ENCODE measurements at regions of chr5 and their contacts with region 1.

Region 1: DNA sequence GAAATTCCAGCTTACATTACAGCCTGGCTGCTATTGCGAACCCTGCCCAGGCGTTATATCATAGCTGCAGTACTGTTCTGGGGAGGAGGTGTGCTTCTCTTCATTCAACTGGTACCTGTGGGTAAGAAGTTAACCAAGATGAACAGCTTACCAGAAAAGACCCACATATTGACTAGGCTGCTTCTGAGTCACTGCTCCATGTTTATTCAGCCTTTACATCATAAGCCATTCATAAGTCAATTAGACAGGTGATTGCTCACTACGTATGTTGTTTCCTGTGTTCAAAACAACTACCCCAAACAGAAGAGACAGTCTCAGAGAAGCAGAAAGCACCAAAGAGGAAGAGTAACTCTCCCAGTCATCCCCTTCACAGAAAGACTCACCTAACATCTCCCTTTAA is 34.7 kb upstream of the SLC22A5 start:
- DNase-seq: no peak
- H3K4me3 ChIP-seq: no peak overlapping the region
- H3K27ac ChIP-seq: no peak overlapping the region
- H3K4me1 ChIP-seq: no peaks in the 10 kb centered on the region
- H3K27me3 ChIP-seq: no peaks in the 10 kb centered on the region
- CTCF ChIP-seq: no peak

Region 2: GRCh38 chr5:131281133-131281867 is 1053.5 kb before region 1 on chr5:
- CTCF ChIA-PET with region 1: no interaction called
- POLR2A ChIA-PET with region 1: no interaction called
- intact Hi-C with region 1: no loop called
- DNase-seq: no peak
- H3K4me3 ChIP-seq: no peak overlapping the region
- H3K27ac ChIP-seq: no peak overlapping the region
- H3K4me1 ChIP-seq: peaks cover 22% of the 10 kb centered on the region
- H3K27me3 ChIP-seq: no peaks in the 10 kb centered on the region
- CTCF ChIP-seq: no peak

Region 3: DNA sequence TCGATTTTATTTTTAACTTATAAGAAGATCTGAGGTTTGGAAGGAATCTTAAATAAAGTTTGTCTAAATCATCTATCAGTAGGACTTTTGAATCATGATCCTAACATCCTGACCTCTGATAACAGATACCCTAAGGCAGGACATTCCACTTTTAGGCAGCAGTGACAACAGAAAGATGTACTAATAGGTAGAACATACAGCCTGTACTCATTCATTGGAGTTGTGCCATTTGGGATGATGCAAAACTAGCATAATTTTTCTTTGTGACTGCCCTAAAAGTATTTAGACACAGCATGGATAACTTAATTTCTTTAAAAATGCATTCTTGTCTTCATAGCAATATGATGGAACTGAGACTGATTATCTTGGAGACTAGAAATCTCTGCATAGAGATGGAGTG is 1031.3 kb before region 1 on chr5:
- CTCF ChIA-PET with region 1: no interaction called
- POLR2A ChIA-PET with region 1: no interaction called
- intact Hi-C with region 1: no loop called
- DNase-seq: peak; percentile 53
- H3K4me3 ChIP-seq: no peak overlapping the region
- H3K27ac ChIP-seq: peak overlapping the region; percentile 38
- H3K4me1 ChIP-seq: peaks cover 31% of the 10 kb centered on the region
- H3K27me3 ChIP-seq: no peaks in the 10 kb centered on the region
- CTCF ChIP-seq: no peak

Region 4: DNA sequence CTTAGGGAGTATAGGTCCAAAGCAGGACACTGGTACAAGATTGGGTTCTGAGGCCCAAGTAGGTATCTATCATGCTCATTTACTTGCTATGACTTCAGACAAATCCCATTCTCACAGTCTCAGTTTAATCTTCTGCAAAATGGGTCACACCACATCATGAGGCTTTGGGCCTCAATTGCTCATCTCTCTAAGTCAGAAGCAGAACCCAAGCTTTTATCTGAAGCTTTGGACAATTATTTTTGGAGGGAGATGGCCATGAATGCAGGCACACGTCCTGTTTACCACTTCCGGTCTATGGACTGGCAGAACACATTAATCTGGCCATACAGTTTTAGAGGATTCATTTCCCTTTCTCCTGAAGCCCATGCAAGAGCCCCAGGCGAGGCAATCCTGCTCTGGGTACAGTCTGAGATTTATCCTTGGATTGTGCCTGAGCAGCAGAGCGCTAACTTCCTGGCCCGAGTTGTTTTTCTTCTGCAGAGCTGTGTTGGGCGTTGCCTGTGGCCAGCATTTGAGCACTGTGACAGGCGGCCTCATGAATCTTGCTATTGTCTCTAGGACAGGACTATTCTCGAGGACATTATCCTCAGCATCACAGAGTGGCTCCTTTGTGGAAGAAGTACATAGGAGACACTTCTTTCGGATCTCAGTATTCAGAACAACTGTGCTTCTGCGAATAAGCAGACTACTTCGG is 24.5 kb before region 1 on chr5:
- CTCF ChIA-PET with region 1: no interaction called
- POLR2A ChIA-PET with region 1: no interaction called
- intact Hi-C with region 1: loop called (anchors 1 kb)
- DNase-seq: no peak
- H3K4me3 ChIP-seq: no peak overlapping the region
- H3K27ac ChIP-seq: no peak overlapping the region
- H3K4me1 ChIP-seq: no peaks in the 10 kb centered on the region
- H3K27me3 ChIP-seq: no peaks in the 10 kb centered on the region
- CTCF ChIP-seq: no peak

Region 5: GRCh38 chr5:132315529-132316083 is 19.2 kb before region 1 on chr5:
- CTCF ChIA-PET with region 1: no interaction called
- POLR2A ChIA-PET with region 1: interaction called, 15 read pairs
- intact Hi-C with region 1: loop called (anchors 1 kb)
- DNase-seq: no peak
- H3K4me3 ChIP-seq: no peak overlapping the region
- H3K27ac ChIP-seq: no peak overlapping the region
- H3K4me1 ChIP-seq: peaks cover 7% of the 10 kb centered on the region
- H3K27me3 ChIP-seq: no peaks in the 10 kb centered on the region
- CTCF ChIP-seq: no peak